ENCODE measurements at regions of chr9 and their contacts with region 1.

Region 1: GRCh38 chr9:68999393-69000105 is 14.4 kb downstream of the PRKACG start:
- DNase-seq: peak; percentile 66
- ATAC-seq: peak; percentile 99
- H3K4me3 ChIP-seq: no peak overlapping the region
- H3K27ac ChIP-seq: no peak overlapping the region
- H3K4me1 ChIP-seq: peaks cover 11% of the 10 kb centered on the region
- H3K27me3 ChIP-seq: no peaks in the 10 kb centered on the region
- CTCF ChIP-seq: peak; percentile 84 to 91 (median 89)
- EP300 ChIP-seq: no peak
- POLR2A ChIP-seq: no peak
- RAD21 ChIP-seq: peak; percentile 99

Region 2: DNA sequence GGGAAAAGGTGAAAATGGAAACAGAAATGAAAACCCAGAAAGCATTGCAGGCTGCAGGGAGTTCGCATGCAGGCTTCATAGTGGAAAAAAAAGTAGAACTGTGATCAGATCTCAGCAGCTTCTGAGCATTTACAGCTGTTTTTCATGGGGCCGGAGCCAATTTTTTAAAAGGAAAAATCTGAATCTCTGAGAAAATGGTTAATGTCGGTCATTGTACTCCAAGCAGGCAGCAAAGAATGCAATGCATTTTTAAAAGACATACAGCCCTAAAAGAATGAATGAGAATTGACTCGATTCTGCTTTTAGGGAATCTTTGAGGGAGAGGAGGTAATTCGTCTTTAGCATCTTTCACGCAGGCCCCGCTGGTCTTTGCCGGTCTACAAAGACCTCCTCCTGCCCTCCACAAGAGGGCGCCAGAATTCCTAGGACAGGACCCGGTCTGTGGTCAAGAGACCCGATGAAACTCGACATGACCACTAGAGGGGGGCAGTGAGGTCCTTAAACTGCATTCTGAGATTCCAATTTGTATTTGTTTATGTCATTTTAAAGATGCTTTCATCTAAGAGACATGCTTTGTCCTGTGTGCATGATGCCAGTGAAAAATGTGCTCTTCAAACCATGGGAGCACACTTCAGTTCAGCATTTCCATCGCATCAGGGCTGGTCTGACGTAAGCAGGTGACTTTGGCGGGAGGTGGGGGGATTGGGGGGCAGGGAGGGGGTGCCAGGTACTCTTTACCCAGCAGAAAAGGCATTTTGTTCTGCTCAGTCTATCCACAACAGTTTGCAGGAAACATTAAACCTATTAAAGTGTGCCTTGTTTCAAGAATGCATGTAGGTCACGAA is 415.1 kb before region 1 on chr9:
- CTCF ChIA-PET with region 1: interaction called, 39 read pairs
- POLR2A ChIA-PET with region 1: no interaction called
- RAD21 ChIA-PET with region 1: interaction called, 6 read pairs
- SMC1A ChIA-PET with region 1: interaction called, 14 read pairs
- in situ Hi-C with region 1: loop called (anchors 5 kb)
- intact Hi-C with region 1: loop called (anchors 1 kb)
- DNase-seq: peak; percentile 58
- ATAC-seq: peak; percentile 100
- H3K4me3 ChIP-seq: no peak overlapping the region
- H3K27ac ChIP-seq: no peak overlapping the region
- H3K4me1 ChIP-seq: no peaks in the 10 kb centered on the region
- H3K27me3 ChIP-seq: no peaks in the 10 kb centered on the region
- CTCF ChIP-seq: peak; percentile 99 to 100 (median 100); a peak in 5 of 6 replicates
- EP300 ChIP-seq: no peak
- POLR2A ChIP-seq: no peak
- RAD21 ChIP-seq: peak; percentile 100

Region 3: GRCh38 chr9:68704814-68705530 is 294.6 kb before region 1 on chr9 and contains the start of gene PIP5K1B:
- CTCF ChIA-PET with region 1: interaction called, 5 read pairs
- POLR2A ChIA-PET with region 1: no interaction called
- RAD21 ChIA-PET with region 1: interaction called, 3 read pairs
- SMC1A ChIA-PET with region 1: interaction called, 4 read pairs
- in situ Hi-C with region 1: loop called (anchors 10 kb)
- intact Hi-C with region 1: loop called (anchors 5 kb)
- DNase-seq: no peak
- ATAC-seq: peak; percentile 87
- H3K4me3 ChIP-seq: peak within 1 kb of the TSS; percentile 98
- H3K27ac ChIP-seq: peak within 1 kb of the TSS; percentile 72
- H3K4me1 ChIP-seq: peaks cover 28% of the 10 kb centered on the region
- H3K27me3 ChIP-seq: peaks cover 3 to 5% of the 10 kb centered on the region in 2 experiments
- CTCF ChIP-seq: 0 out of 6 replicates have a peak, but pooled peaks of 2 of the 3 experiments have one; percentile 2
- EP300 ChIP-seq: no peak
- POLR2A ChIP-seq: peak; percentile 59
- RAD21 ChIP-seq: no peak
- polyA plus RNA-seq, gene PIP5K1B: 6.8 to 10.9 TPM

Region 4: DNA sequence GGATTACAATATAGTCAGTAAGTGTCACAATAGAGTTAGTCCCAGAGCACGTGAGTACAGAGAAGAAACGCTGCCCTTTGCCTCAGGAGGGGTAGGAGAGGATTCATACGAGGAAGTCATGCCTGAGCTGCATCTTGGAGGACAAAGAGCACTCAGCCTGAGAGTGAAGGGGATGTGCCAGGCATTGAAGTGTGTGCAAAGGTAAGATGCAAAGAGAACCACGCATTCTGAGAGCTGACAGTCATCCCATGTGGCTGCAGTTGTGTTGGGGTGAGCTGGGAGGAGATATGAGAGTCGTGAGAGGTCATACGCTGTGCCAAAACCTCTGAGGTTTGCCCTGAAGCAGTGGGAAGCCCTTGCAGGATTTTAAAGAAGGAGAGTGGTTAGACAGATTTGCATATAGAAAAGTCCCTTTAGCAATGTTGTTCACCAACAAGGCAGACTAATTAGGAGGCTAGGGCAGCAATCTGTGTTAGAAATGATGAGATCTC is 197.0 kb before region 1 on chr9:
- CTCF ChIA-PET with region 1: interaction called, 4 read pairs
- POLR2A ChIA-PET with region 1: no interaction called
- RAD21 ChIA-PET with region 1: interaction called, 6 read pairs
- SMC1A ChIA-PET with region 1: no interaction called
- in situ Hi-C with region 1: no loop called
- intact Hi-C with region 1: loop called (anchors 5 kb)
- DNase-seq: peak; percentile 91
- ATAC-seq: peak; percentile 98
- H3K4me3 ChIP-seq: peak overlapping the region; percentile 27; the same call in 1 of the 2 replicates
- H3K27ac ChIP-seq: peak overlapping the region; percentile 30; the same call in 1 of the 2 replicates
- H3K4me1 ChIP-seq: peaks cover 32% of the 10 kb centered on the region
- H3K27me3 ChIP-seq: no peaks in the 10 kb centered on the region
- CTCF ChIP-seq: no peak
- EP300 ChIP-seq: no peak; a peak in 1 of 4 replicates
- POLR2A ChIP-seq: 0 out of 2 replicates have a peak, but pooled peaks have one; percentile 41
- RAD21 ChIP-seq: 0 out of 2 replicates have a peak, but pooled peaks have one; percentile 6

Region 5: GRCh38 chr9:68852941-68853340 is 146.6 kb before region 1 on chr9:
- CTCF ChIA-PET with region 1: interaction called, 10 read pairs
- POLR2A ChIA-PET with region 1: no interaction called
- RAD21 ChIA-PET with region 1: interaction called, 3 read pairs
- SMC1A ChIA-PET with region 1: interaction called, 4 read pairs
- in situ Hi-C with region 1: loop called (anchors 5 kb)
- intact Hi-C with region 1: loop called (anchors 5 kb)
- DNase-seq: no peak
- ATAC-seq: no peak
- H3K4me3 ChIP-seq: no peak overlapping the region
- H3K27ac ChIP-seq: no peak overlapping the region
- H3K4me1 ChIP-seq: no peaks in the 10 kb centered on the region
- H3K27me3 ChIP-seq: no peaks in the 10 kb centered on the region
- CTCF ChIP-seq: no peak
- EP300 ChIP-seq: no peak
- POLR2A ChIP-seq: no peak
- RAD21 ChIP-seq: no peak

Region 6: GRCh38 chr9:68949271-68950000 is 50.1 kb before region 1 on chr9:
- CTCF ChIA-PET with region 1: interaction called, 28 read pairs
- POLR2A ChIA-PET with region 1: no interaction called
- RAD21 ChIA-PET with region 1: interaction called, 44 read pairs
- SMC1A ChIA-PET with region 1: interaction called, 18 read pairs
- in situ Hi-C with region 1: no loop called
- intact Hi-C with region 1: loop called (anchors 2 kb)
- DNase-seq: peak; percentile 45
- ATAC-seq: peak; percentile 57
- H3K4me3 ChIP-seq: no peak overlapping the region
- H3K27ac ChIP-seq: peak overlapping the region; percentile 54
- H3K4me1 ChIP-seq: peaks cover 44% of the 10 kb centered on the region
- H3K27me3 ChIP-seq: no peaks in the 10 kb centered on the region; a peak in 1 of 4 replicates
- CTCF ChIP-seq: peak; percentile 14 to 56 (median 49); a peak in 5 of 6 replicates
- EP300 ChIP-seq: no peak
- POLR2A ChIP-seq: no peak
- RAD21 ChIP-seq: peak; percentile 77

Region 7: DNA sequence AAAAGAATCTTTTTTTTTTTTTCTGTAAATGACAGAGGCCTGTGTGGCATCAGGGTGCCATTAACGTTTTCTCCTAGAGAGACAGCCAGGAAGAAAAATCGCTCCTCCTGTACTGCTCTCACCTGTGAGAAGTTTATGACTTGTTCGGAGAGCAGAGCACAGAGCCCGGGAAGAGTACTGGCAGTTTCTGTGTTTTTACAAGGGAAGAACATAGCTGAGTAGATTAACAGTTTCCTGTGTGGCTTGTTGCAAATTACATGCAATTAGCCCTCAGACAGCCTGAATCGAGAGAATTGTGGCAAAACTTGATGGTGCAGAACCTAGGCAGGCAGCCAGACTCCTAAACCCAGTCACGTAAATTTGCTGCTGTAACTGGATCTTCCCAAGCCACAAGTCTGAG is 17.8 kb before region 1 on chr9:
- CTCF ChIA-PET with region 1: interaction called, 13 read pairs
- POLR2A ChIA-PET with region 1: no interaction called
- RAD21 ChIA-PET with region 1: interaction called, 8 read pairs
- SMC1A ChIA-PET with region 1: interaction called, 21 read pairs
- in situ Hi-C with region 1: no loop called
- intact Hi-C with region 1: no loop called
- DNase-seq: peak; percentile 83
- ATAC-seq: peak; percentile 74
- H3K4me3 ChIP-seq: peak overlapping the region; percentile 33; the same call in 1 of the 2 replicates
- H3K27ac ChIP-seq: peak overlapping the region; percentile 70
- H3K4me1 ChIP-seq: peaks cover 61% of the 10 kb centered on the region
- H3K27me3 ChIP-seq: no peaks in the 10 kb centered on the region
- CTCF ChIP-seq: no peak
- EP300 ChIP-seq: peak; percentile 50 to 70; a peak in 2 of 4 replicates
- POLR2A ChIP-seq: no peak
- RAD21 ChIP-seq: no peak

Measured in GM12878 (cell line).